Dorsolateral prefrontal cortex (tissue), 120 donors: ENCODE measurements at regions of chr1 and their contacts with region 1.

Region 1: GRCh38 chr1:103106426-103107341 is 1.6 kb downstream of the COL11A1 start:
- DNase-seq: peak in 5 of 10 donors; percentile 27 to 60 (median 43)
- H3K4me3 ChIP-seq: peak overlapping the region; percentile 36 to 76 (median 62)
- H3K27ac ChIP-seq: peak overlapping the region in 33 of 59 donors; percentile 1 to 85 (median 53)
- H3K27me3 ChIP-seq: no peaks in the 10 kb centered on the region
- CTCF ChIP-seq: peak; percentile 32 to 78 (median 62)

Region 2: GRCh38 chr1:103145449-103145848 is 38.8 kb after region 1 on chr1:
- intact Hi-C with region 1: no loop called
- DNase-seq: no peak
- H3K4me3 ChIP-seq: no peak overlapping the region
- H3K27ac ChIP-seq: no peak overlapping the region
- H3K27me3 ChIP-seq: no peaks in the 10 kb centered on the region
- CTCF ChIP-seq: no peak

Region 3: DNA sequence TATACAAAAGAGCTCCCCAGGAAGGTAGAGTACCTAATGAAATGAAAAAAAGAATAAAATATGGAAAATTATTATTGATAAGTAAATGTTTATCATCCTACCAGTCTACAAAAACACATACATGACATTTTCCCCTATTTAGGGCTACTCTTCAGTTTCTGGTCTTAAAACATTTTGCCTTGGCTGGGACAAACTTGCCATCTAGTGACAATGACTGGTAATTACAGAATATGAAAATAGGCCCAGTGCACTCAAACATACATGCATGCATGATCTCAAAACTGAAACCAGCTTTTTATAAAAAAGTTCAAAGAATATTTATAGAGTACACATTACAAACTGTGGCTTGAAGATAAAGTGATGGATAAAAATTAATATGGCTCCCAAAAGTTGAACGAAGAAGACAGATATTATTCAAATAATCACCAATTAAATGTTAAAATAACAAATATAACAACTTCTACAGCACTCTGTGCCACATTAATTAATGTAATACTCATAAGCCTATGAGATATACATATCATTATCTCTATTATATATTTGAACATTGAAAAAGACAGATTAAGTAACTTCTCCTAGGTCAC is 408.3 kb after region 1 on chr1:
- intact Hi-C with region 1: loop called in 1 of 2 experiments (anchors 10 kb)
- DNase-seq: no peak
- H3K4me3 ChIP-seq: no peak overlapping the region
- H3K27ac ChIP-seq: no peak overlapping the region
- H3K27me3 ChIP-seq: no peaks in the 10 kb centered on the region
- CTCF ChIP-seq: peak; percentile 36 to 90 (median 77)